PC-3 (cell line): ENCODE measurements at regions of chr7 and their contacts with region 1.

Region 1: GRCh38 chr7:88226886-88227516 is 7.2 kb upstream of the SRI start:
- DNase-seq: peak; percentile 98
- ATAC-seq: peak; percentile 93
- H3K4me3 ChIP-seq: no peak overlapping the region
- H3K27ac ChIP-seq: peak overlapping the region; percentile 78
- H3K4me1 ChIP-seq: peaks cover 37% of the 10 kb centered on the region
- H3K27me3 ChIP-seq: no peaks in the 10 kb centered on the region
- CTCF ChIP-seq: no peak

Region 2: GRCh38 chr7:88281715-88282114 is 54.7 kb after region 1 on chr7:
- CTCF ChIA-PET with region 1: no interaction called
- POLR2A ChIA-PET with region 1: interaction called, 7 read pairs
- intact Hi-C with region 1: loop called (anchors 2 kb)
- DNase-seq: peak; percentile 64
- ATAC-seq: peak; percentile 94
- H3K4me3 ChIP-seq: no peak overlapping the region
- H3K27ac ChIP-seq: peak overlapping the region; percentile 81
- H3K4me1 ChIP-seq: peaks cover 16% of the 10 kb centered on the region
- H3K27me3 ChIP-seq: no peaks in the 10 kb centered on the region
- CTCF ChIP-seq: no peak

Region 3: DNA sequence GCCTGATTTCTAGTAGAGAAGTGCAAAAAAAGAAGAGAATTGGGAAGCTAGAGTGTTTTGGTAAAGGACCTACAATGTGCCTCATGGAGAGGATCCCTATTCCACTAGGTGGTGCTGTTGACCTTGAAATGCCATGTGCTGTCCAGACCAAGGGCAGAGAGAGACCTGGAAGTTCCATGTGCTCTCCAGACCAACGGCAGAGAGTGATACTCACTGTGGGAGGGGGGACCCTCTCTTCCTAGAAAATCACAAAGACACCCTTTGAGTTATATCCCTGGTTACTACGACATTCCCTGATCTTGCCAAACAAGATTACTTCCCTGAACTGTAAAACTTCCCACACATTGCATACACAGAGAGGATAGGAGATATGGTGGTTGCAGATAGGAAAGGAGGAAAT is 319.8 kb after region 1 on chr7:
- CTCF ChIA-PET with region 1: no interaction called
- POLR2A ChIA-PET with region 1: no interaction called
- intact Hi-C with region 1: no loop called
- DNase-seq: peak; percentile 62
- ATAC-seq: peak; percentile 82
- H3K4me3 ChIP-seq: no peak overlapping the region
- H3K27ac ChIP-seq: no peak overlapping the region
- H3K4me1 ChIP-seq: no peaks in the 10 kb centered on the region
- H3K27me3 ChIP-seq: no peaks in the 10 kb centered on the region
- CTCF ChIP-seq: peak; percentile 68